Panc1 (cell line): ENCODE measurements at regions of chr19 and their contacts with region 1.

Region 1: DNA sequence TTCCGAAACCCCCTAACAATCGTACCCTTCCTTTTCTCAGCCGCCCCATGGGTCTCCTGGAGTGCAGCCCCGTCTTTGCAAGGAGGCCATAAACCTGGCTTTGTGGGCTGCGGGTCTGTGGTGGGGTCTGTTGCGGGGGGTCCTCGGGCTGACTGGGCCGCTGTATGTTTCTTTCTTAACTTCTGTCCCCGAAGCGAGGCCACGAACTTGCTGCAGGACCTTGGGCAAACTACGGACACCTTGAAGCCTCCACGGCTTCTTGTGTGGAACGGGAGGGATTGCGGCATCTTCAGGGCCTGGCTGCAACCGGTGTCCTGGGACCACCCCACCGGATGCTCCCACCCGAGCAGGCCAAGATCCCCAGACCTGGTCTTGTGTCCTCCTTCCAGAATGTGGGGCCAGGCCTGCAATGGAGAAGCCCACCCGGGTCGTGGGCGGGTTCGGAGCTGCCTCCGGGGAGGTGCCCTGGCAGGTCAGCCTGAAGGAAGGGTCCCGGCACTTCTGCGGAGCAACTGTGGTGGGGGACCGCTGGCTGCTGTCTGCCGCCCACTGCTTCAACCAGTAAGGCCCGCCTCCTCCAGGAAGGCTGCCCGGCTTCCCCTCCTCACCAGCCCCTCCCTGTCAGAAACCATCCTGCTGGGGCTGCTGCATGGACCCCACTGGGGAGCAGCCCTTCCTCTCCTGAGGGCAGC is 12.0 kb downstream of the TIMM13 start:
- DNase-seq: no peak
- ATAC-seq: no peak
- H3K4me3 ChIP-seq: no peak overlapping the region
- H3K27ac ChIP-seq: no peak overlapping the region
- H3K4me1 ChIP-seq: no peaks in the 10 kb centered on the region
- H3K27me3 ChIP-seq: no peaks in the 10 kb centered on the region
- CTCF ChIP-seq: no peak

Region 2: DNA sequence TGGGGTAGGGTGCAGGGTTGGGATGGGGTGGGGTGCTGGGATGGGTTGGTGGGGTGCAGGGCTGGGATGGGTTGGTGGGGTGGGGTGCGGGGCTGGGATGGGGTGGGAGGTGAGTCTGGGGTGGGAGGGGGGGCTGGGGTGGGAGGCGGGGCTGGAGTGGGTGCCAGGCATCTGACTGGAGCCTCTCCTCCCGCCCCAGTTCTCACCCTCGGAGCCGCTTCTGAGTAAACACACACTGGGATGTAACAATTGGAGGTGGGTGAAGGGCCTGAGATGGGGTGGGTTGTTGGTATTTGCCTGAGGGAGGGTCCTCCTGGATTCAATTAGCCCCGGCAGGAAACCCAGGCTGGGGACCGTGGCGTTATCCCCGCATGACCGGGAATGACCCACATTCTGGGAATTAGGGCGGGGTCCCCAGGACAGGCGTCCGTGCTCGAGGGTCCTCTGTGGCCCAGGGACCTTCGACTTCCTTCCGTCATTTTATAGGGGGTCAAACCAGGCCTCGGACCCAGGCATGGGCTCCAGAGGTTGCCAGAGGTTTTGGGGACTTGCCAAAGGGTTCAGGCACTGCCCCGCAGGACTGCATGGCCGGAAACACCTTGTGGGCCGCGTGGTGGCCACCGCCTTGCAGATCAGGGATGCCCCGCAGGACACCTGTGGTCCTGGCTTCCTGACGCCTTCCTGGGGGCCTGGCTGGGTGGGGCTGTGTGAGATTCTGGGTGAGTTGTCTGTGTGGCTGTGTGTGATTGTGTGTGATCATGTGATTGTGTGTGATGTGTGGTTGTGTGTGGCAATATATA is 54.0 kb before region 1 on chr19:
- CTCF ChIA-PET with region 1: no interaction called
- POLR2A ChIA-PET with region 1: interaction called, 11 read pairs
- in situ Hi-C with region 1: no loop called
- intact Hi-C with region 1: no loop called
- DNase-seq: no peak
- ATAC-seq: no peak
- H3K4me3 ChIP-seq: no peak overlapping the region
- H3K27ac ChIP-seq: no peak overlapping the region
- H3K4me1 ChIP-seq: no peaks in the 10 kb centered on the region; the same call in 1 of the 2 replicates
- H3K27me3 ChIP-seq: no peaks in the 10 kb centered on the region; the same call in 1 of the 2 replicates
- CTCF ChIP-seq: no peak